GM18951 (cell line): ENCODE measurements at regions of chr3 and their contacts with region 1.

Region 1: GRCh38 chr3:170307671-170308403 is 49.7 kb upstream of the SKIL start:
- POLR2A ChIP-seq: no peak

Region 2: DNA sequence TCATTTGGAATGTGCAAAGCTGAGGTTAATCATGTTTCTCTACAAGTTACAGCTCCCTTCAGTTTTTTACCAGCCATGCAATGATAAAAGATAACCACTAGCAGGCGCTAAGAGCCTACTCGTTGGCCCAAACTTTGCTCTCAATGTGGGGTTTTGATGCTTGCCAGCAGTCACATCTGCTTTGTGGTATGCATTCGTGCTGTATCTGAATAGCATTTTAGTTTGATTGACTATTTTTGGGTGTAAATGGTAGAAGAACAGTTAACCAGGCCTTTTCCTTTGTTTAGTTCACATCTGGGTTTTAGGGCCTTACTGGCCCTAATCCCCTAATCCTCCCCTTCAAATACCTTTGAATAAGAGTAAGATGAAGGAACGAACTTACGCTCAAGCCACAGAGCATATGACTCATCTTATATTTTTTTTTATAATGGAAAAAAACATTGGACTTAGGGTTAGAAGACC is 106.4 kb after region 1 on chr3:
- in situ Hi-C with region 1: loop called (anchors 5 kb)
- POLR2A ChIP-seq: no peak

Region 3: GRCh38 chr3:170689893-170690660 is 382.2 kb after region 1 on chr3:
- in situ Hi-C with region 1: loop called (anchors 25 kb)
- POLR2A ChIP-seq: no peak